ENCODE measurements at regions of chr6 and their contacts with region 1.

Region 1: GRCh38 chr6:16514249-16514648 is 247.0 kb downstream of the ATXN1 start:
- DNase-seq: peak in 1 of 2 experiments; percentile 36
- H3K4me3 ChIP-seq: no peak overlapping the region
- H3K4me3 Mint-ChIP-seq: no peak overlapping the region
- H3K27ac Mint-ChIP-seq: no peak overlapping the region
- H3K4me1 ChIP-seq: no peaks in the 10 kb centered on the region
- H3K4me1 Mint-ChIP-seq: peaks cover 12% of the 10 kb centered on the region
- H3K27me3 ChIP-seq: no peaks in the 10 kb centered on the region
- H3K27me3 Mint-ChIP-seq: no peaks in the 10 kb centered on the region
- CTCF ChIP-seq: peak; percentile 40 to 69

Region 2: DNA sequence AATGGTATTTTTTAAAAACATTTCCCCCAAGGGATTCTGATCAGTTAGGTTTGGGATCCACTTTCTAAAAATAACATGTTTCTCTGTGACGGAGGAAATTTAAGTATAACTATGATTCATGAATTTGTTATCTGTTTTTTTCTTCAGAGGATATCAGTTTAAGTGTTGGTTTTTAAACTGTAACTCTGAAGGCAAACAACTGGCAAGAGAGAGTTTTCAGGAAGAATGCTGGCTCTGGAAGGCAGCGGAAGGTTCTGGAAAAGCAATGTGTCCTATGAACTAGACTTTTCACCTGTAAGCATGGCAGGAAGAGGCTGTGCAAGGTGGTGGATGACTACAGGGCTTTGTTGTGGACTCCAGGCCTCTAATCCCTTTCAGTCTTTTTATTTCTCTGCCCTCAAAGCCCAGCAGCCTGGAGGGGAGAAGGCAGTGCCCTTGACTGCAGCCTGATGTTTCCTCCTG is 122.8 kb before region 1 on chr6:
- CTCF ChIA-PET with region 1: no interaction called
- POLR2A ChIA-PET with region 1: no interaction called
- intact Hi-C with region 1: no loop called
- DNase-seq: no peak
- H3K4me3 ChIP-seq: no peak overlapping the region
- H3K4me3 Mint-ChIP-seq: no peak overlapping the region
- H3K27ac Mint-ChIP-seq: no peak overlapping the region
- H3K4me1 ChIP-seq: no peaks in the 10 kb centered on the region; the same call in 1 of the 2 replicates
- H3K4me1 Mint-ChIP-seq: no peaks in the 10 kb centered on the region
- H3K27me3 ChIP-seq: no peaks in the 10 kb centered on the region
- H3K27me3 Mint-ChIP-seq: no peaks in the 10 kb centered on the region
- CTCF ChIP-seq: no peak

Region 3: DNA sequence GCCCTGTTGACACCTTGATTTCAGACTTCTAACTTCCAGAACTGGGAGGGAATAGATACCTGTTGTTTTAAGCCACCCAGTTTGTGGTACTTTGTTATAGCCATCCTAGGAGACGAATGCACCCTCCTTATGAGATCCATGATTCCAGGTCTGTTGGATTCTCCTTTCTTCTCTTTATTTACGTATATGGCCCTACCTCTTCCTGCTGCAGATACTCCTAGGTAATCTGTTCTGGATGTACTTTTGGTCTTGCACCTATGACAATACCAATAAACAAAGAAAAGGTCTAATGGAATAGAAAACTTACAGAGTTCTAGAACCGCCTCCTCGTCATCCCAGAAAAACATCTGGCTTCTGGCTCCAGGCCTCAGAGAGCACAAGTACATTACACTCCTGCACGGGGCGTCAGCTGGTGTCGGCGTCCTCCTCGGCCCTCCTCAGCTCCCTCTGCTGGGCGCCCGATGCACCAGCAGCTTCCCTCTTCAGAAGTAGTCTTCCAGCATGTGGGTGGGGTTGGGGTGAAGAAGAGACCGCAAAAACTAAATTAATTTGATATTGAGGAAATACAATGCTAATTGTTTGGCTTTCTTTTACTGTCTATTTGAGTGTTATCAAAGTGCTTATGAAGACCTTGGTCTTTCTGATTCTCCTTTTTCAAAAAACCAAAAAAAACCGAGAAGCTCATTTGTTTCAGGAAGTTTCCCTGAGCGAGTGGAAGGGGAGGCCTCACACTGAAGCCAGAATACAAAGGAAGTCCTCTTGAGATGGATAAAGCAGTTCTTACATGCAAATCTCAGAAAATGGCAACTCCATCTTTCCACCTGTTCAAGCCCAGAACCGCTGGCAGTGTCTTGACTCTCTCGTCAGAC is 256.7 kb after region 1 on chr6:
- CTCF ChIA-PET with region 1: interaction called, 8 read pairs
- POLR2A ChIA-PET with region 1: no interaction called
- intact Hi-C with region 1: loop called (anchors 2 kb)
- DNase-seq: peak; percentile 68 to 78
- H3K4me3 ChIP-seq: no peak overlapping the region
- H3K4me3 Mint-ChIP-seq: no peak overlapping the region
- H3K27ac Mint-ChIP-seq: no peak overlapping the region
- H3K4me1 ChIP-seq: peaks cover 12% of the 10 kb centered on the region
- H3K4me1 Mint-ChIP-seq: peaks cover 24% of the 10 kb centered on the region
- H3K27me3 ChIP-seq: no peaks in the 10 kb centered on the region
- H3K27me3 Mint-ChIP-seq: peaks cover 3% of the 10 kb centered on the region
- CTCF ChIP-seq: peak; percentile 87 to 95

Region 4: DNA sequence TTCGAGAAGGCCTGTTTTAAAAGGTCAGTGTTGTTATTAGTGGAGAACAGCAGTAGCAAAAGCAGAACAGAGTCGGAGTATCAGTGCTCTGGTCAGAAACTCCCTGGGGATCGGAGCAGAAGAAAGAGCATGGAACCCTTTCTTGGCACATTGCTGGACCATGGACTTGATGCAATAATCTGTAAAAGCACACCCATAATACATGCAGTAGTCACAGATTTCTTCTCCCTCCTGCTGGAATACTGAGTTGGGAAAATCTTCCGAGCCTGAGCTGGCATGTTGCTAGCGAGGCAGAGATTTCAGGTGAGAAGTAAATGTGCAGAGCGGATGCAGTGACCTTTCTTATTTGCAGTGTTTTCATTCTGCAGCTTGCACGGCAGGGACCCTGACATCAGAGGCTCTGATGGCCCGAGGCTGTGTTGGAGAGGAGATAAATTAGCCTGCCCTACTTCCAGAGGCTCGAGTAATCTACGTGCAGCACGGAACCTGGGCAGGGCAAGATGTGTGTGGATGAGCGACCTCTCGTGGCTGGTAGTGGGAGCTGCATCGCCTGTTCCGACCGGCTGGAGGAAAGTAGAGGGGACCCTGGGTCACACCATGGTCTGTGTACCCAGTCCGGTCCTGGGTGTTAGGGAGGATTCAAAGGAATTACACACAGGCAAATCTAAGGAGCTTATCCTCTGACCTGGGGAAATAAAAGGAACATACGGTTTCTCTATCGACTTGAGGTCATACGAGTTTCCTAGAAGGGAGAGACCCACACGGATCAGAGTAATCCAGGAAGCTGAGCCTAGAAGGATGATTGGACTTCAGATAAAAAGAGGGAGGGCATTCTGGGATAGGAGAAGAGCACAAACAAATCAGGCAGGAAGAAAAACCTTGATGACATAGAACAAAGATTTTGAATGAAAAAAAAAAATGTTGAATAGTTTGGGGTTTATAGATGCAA is 450.6 kb after region 1 on chr6:
- CTCF ChIA-PET with region 1: no interaction called
- POLR2A ChIA-PET with region 1: no interaction called
- intact Hi-C with region 1: loop called (anchors 5 kb)
- DNase-seq: peak; percentile 68 to 75
- H3K4me3 ChIP-seq: no peak overlapping the region
- H3K4me3 Mint-ChIP-seq: no peak overlapping the region
- H3K27ac Mint-ChIP-seq: no peak overlapping the region
- H3K4me1 ChIP-seq: no peaks in the 10 kb centered on the region
- H3K4me1 Mint-ChIP-seq: peaks cover 7% of the 10 kb centered on the region
- H3K27me3 ChIP-seq: no peaks in the 10 kb centered on the region; the same call in none of the 2 replicates
- H3K27me3 Mint-ChIP-seq: peaks cover 18% of the 10 kb centered on the region
- CTCF ChIP-seq: peak; percentile 65 to 88